Naive thymus-derived CD4-positive, alpha-beta T cell (primary cell): ENCODE measurements at regions of chr3 and their contacts with region 1.

Region 1: GRCh38 chr3:18389108-18389733 is 35.9 kb downstream of the SATB1 start:
- DNase-seq: peak in 7 of 9 donors; percentile 32 to 63 (median 53)
- ATAC-seq: peak; percentile 71
- H3K4me3 ChIP-seq: no peak overlapping the region
- H3K4me3 Mint-ChIP-seq: peak overlapping the region in 8 of 10 donors; percentile 4 to 58 (median 28)
- H3K27ac ChIP-seq: peak overlapping the region; percentile 17
- H3K27ac Mint-ChIP-seq: peak overlapping the region in 7 of 9 donors; percentile 2 to 79 (median 47)
- H3K4me1 ChIP-seq: peaks cover 0 to 41% of the 10 kb centered on the region in 2 donors
- H3K4me1 Mint-ChIP-seq: peaks cover 21 to 95% (median 88%) of the 10 kb centered on the region in 7 donors
- H3K27me3 ChIP-seq: no peaks in the 10 kb centered on the region
- H3K27me3 Mint-ChIP-seq: no peaks in the 10 kb centered on the region

Region 2: GRCh38 chr3:17742108-17742879 is 646.9 kb before region 1 on chr3 and contains the start of gene TBC1D5:
- CTCF ChIA-PET with region 1: interaction called, 3 read pairs
- POLR2A ChIA-PET with region 1: no interaction called
- intact Hi-C with region 1: loop called in 1 of 2 experiments (anchors 10 kb)
- DNase-seq: peak; percentile 77 to 91 (median 84)
- ATAC-seq: peak; percentile 95
- H3K4me3 ChIP-seq: peak within 1 kb of the TSS; percentile 72
- H3K4me3 Mint-ChIP-seq: peak within 1 kb of the TSS; percentile 79 to 96 (median 92)
- H3K27ac ChIP-seq: peak within 1 kb of the TSS; percentile 71
- H3K27ac Mint-ChIP-seq: peak within 1 kb of the TSS; percentile 74 to 96 (median 88)
- H3K4me1 ChIP-seq: peaks cover 6 to 8% of the 10 kb centered on the region in 2 donors
- H3K4me1 Mint-ChIP-seq: peaks cover 17 to 49% (median 39%) of the 10 kb centered on the region in 7 donors
- H3K27me3 ChIP-seq: no peaks in the 10 kb centered on the region
- H3K27me3 Mint-ChIP-seq: no peaks in the 10 kb centered on the region
- total RNA-seq, gene TBC1D5: 30.5 to 54.0 (median 40.3) TPM

Region 3: DNA sequence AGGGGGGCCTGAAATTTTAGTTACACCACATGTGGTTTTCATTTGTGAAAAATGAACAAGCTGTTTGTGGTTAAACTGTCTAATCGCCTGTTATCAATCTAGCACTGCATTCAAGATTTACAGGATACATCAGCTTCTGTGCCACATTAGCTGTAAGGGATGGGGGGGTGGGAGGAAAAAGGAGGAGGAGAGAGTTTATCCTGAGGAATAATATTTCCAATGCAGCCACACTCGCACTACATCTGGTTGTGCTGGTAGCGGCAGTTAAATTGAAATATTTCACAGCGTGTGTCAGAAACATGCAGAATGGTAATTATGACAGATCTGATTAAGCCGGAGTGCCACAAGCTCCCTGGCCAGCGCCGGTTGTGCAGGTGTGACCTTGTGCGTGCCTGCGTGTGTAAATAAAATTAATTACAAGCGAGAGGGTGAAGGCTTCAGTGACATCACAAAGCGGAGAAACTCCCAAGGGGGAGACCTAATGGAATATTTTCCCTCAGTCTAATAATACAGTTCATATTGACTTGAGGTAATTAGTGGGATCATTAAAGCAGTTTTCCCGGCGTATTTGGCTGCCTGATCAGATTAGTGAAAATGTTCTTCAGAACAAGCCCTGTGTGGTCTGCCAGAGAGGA is 19.6 kb before region 1 on chr3:
- CTCF ChIA-PET with region 1: interaction called, 7 read pairs
- POLR2A ChIA-PET with region 1: interaction called, 3 read pairs
- intact Hi-C with region 1: loop called (anchors 2 kb)
- DNase-seq: no peak
- ATAC-seq: no peak
- H3K4me3 ChIP-seq: no peak overlapping the region
- H3K4me3 Mint-ChIP-seq: peak overlapping the region in 9 of 10 donors; percentile 23 to 74 (median 56)
- H3K27ac ChIP-seq: peak overlapping the region; percentile 4
- H3K27ac Mint-ChIP-seq: peak overlapping the region; percentile 26 to 89 (median 78)
- H3K4me1 ChIP-seq: peaks cover 10 to 48% of the 10 kb centered on the region in 2 donors
- H3K4me1 Mint-ChIP-seq: peaks cover 55 to 100% (median 99%) of the 10 kb centered on the region in 7 donors
- H3K27me3 ChIP-seq: no peaks in the 10 kb centered on the region
- H3K27me3 Mint-ChIP-seq: no peaks in the 10 kb centered on the region

Region 4: DNA sequence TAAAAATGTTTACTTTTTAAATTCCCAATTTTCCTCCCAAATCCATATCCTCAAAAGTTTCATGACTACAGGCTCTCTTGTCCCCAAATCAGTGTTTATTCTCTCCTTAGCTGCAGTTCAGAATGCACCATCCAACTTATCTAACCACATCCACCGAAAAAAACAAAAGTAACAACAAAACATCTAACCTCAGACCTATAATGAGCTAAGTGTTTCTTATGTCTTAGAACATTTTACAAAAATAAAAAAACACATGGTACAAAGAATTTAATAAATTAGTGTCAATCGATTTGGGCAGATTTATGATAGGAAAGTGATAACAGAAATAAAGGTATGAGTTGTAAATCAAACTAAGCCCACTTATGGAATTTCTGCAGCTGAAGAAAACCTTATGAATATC is 22.3 kb after region 1 on chr3:
- CTCF ChIA-PET with region 1: interaction called, 4 read pairs
- POLR2A ChIA-PET with region 1: interaction called, 16 read pairs
- intact Hi-C with region 1: no loop called
- DNase-seq: peak in 7 of 9 donors; percentile 46 to 80 (median 68)
- ATAC-seq: peak; percentile 83
- H3K4me3 ChIP-seq: peak overlapping the region; percentile 9
- H3K4me3 Mint-ChIP-seq: peak overlapping the region; percentile 46 to 88 (median 76)
- H3K27ac ChIP-seq: peak overlapping the region; percentile 55
- H3K27ac Mint-ChIP-seq: peak overlapping the region; percentile 75 to 97 (median 86)
- H3K4me1 ChIP-seq: peaks cover 13 to 87% of the 10 kb centered on the region in 2 donors
- H3K4me1 Mint-ChIP-seq: peaks cover 35 to 98% (median 89%) of the 10 kb centered on the region in 7 donors
- H3K27me3 ChIP-seq: no peaks in the 10 kb centered on the region
- H3K27me3 Mint-ChIP-seq: no peaks in the 10 kb centered on the region

Region 5: GRCh38 chr3:18424729-18425640 is 35.8 kb after region 1 on chr3 and contains the start of gene SATB1:
- CTCF ChIA-PET with region 1: interaction called, 4 read pairs
- POLR2A ChIA-PET with region 1: interaction called, 5 read pairs
- intact Hi-C with region 1: loop called in 1 of 2 experiments (anchors 2 kb)
- DNase-seq: peak; percentile 55 to 72 (median 67)
- ATAC-seq: peak; percentile 62
- H3K4me3 ChIP-seq: peak within 1 kb of the TSS; percentile 72
- H3K4me3 Mint-ChIP-seq: peak within 1 kb of the TSS; percentile 91 to 100 (median 98)
- H3K27ac ChIP-seq: peak within 1 kb of the TSS; percentile 97
- H3K27ac Mint-ChIP-seq: peak within 1 kb of the TSS; percentile 87 to 99 (median 98)
- H3K4me1 ChIP-seq: peaks cover 8 to 21% of the 10 kb centered on the region in 2 donors
- H3K4me1 Mint-ChIP-seq: peaks cover 41 to 72% (median 62%) of the 10 kb centered on the region in 7 donors
- H3K27me3 ChIP-seq: no peaks in the 10 kb centered on the region
- H3K27me3 Mint-ChIP-seq: peaks cover 0 to 2% (median 0%) of the 10 kb centered on the region in 5 donors
- total RNA-seq, gene SATB1: 258 to 482 (median 451) TPM

Region 6: GRCh38 chr3:18787441-18787840 is 398.2 kb after region 1 on chr3:
- CTCF ChIA-PET with region 1: no interaction called
- POLR2A ChIA-PET with region 1: no interaction called
- intact Hi-C with region 1: no loop called
- DNase-seq: peak in 2 of 9 donors; percentile 16 to 31
- ATAC-seq: no peak
- H3K4me3 ChIP-seq: no peak overlapping the region
- H3K4me3 Mint-ChIP-seq: no peak overlapping the region
- H3K27ac ChIP-seq: no peak overlapping the region
- H3K27ac Mint-ChIP-seq: peak overlapping the region in 2 of 9 donors; percentile 44 to 48
- H3K4me1 ChIP-seq: no peaks in the 10 kb centered on the region
- H3K4me1 Mint-ChIP-seq: peaks cover under 1 to 34% (median 10%) of the 10 kb centered on the region in 7 donors
- H3K27me3 ChIP-seq: no peaks in the 10 kb centered on the region
- H3K27me3 Mint-ChIP-seq: no peaks in the 10 kb centered on the region